ENCODE measurements at regions of chr2 and their contacts with region 1.

Region 1: GRCh38 chr2:16608661-16609643 is 56.7 kb downstream of the CYRIA start:
- DNase-seq: peak; percentile 30
- H3K4me3 ChIP-seq: peak overlapping the region; percentile 23 to 62 (median 46)
- H3K27ac ChIP-seq: peak overlapping the region in 1 of 4 donors; percentile 43
- H3K4me1 ChIP-seq: peaks cover 0 to 23% (median 0%) of the 10 kb centered on the region in 3 donors
- H3K27me3 ChIP-seq: no peaks in the 10 kb centered on the region
- CTCF ChIP-seq: peak; percentile 91 to 96 (median 94)
- POLR2A ChIP-seq: no peak

Region 2: GRCh38 chr2:16553226-16553625 is 55.7 kb before region 1 on chr2:
- intact Hi-C with region 1: loop called (anchors 5 kb)
- DNase-seq: no peak
- H3K4me3 ChIP-seq: no peak overlapping the region
- H3K27ac ChIP-seq: no peak overlapping the region
- H3K4me1 ChIP-seq: no peaks in the 10 kb centered on the region
- H3K27me3 ChIP-seq: no peaks in the 10 kb centered on the region
- CTCF ChIP-seq: peak in 5 of 6 experiments; percentile 46 to 62 (median 53)
- POLR2A ChIP-seq: no peak

Region 3: GRCh38 chr2:16756831-16757644 is 148.1 kb after region 1 on chr2:
- intact Hi-C with region 1: loop called (anchors 5 kb)
- DNase-seq: no peak
- H3K4me3 ChIP-seq: peak overlapping the region in 1 of 4 donors; percentile 8
- H3K27ac ChIP-seq: peak overlapping the region in 2 of 4 donors; percentile 47 to 57
- H3K4me1 ChIP-seq: peaks cover 0 to 15% (median 0%) of the 10 kb centered on the region in 3 donors
- H3K27me3 ChIP-seq: no peaks in the 10 kb centered on the region
- CTCF ChIP-seq: peak; percentile 89 to 95 (median 92)
- POLR2A ChIP-seq: no peak